ENCODE measurements at regions of chr16 and their contacts with region 1.

Region 1: GRCh38 chr16:70800781-70801530 is at the start of gene VAC14:
- DNase-seq: peak; percentile 97
- H3K4me3 ChIP-seq: peak within 1 kb of the TSS; percentile 79 to 93 (median 89)
- H3K27ac ChIP-seq: peak within 1 kb of the TSS; percentile 64 to 72 (median 70)
- H3K4me1 ChIP-seq: peaks cover 9 to 31% (median 22%) of the 10 kb centered on the region in 4 donors
- H3K27me3 ChIP-seq: no peaks in the 10 kb centered on the region
- CTCF ChIP-seq: no peak
- EP300 ChIP-seq: no peak
- POLR2A ChIP-seq: no peak
- total RNA-seq, gene VAC14: 31.1 to 47.0 (median 37.0) TPM

Region 2: GRCh38 chr16:71358464-71358998 is 557.6 kb after region 1 on chr16 and contains the start of gene CALB2:
- intact Hi-C with region 1: loop called (anchors 5 kb)
- DNase-seq: no peak
- H3K4me3 ChIP-seq: peak within 1 kb of the TSS; percentile 32 to 51 (median 37)
- H3K27ac ChIP-seq: no peak within 1 kb of the TSS
- H3K4me1 ChIP-seq: peaks cover 8 to 16% (median 14%) of the 10 kb centered on the region in 4 donors
- H3K27me3 ChIP-seq: peaks cover 0 to 45% (median 0%) of the 10 kb centered on the region in 4 donors
- CTCF ChIP-seq: peak in 2 of 3 experiments; percentile 92 to 94
- EP300 ChIP-seq: no peak
- POLR2A ChIP-seq: no peak
- total RNA-seq, gene CALB2: 0.71 to 3.6 (median 2.4) TPM

Measured in esophagus muscularis mucosa (tissue), 4 donors.